Calu3 (cell line): ENCODE measurements at regions of chr3 and their contacts with region 1.

Region 1: DNA sequence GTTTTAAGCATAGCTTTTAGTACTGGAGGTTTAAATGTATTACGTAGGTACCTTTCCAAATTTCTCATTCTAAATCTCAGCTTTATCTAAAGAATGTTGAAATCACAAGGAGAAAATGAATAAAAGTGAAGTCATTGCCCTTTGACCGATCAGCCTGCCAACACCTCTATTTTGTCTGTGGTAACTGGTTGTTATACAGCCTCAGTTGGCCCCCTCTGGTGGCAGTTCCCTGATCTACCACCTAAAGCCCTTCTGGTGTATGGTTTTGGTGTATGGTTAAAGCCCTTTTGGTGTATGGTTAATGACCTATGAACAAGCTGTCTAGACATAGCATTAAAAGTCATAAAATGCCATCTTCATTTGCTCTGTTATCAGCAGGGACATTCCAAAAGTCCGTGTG is 378.2 kb upstream of the AZI2 start:
- DNase-seq: peak; percentile 64
- H3K4me3 Mint-ChIP-seq: no peak overlapping the region
- H3K27ac Mint-ChIP-seq: no peak overlapping the region
- H3K4me1 Mint-ChIP-seq: no peaks in the 10 kb centered on the region
- H3K27me3 Mint-ChIP-seq: no peaks in the 10 kb centered on the region
- CTCF ChIP-seq: peak; percentile 46

Region 2: GRCh38 chr3:28171962-28172361 is 554.9 kb before region 1 on chr3:
- CTCF ChIA-PET with region 1: no interaction called
- intact Hi-C with region 1: no loop called
- DNase-seq: no peak
- H3K4me3 Mint-ChIP-seq: no peak overlapping the region
- H3K27ac Mint-ChIP-seq: no peak overlapping the region
- H3K4me1 Mint-ChIP-seq: no peaks in the 10 kb centered on the region
- H3K27me3 Mint-ChIP-seq: no peaks in the 10 kb centered on the region
- CTCF ChIP-seq: no peak

Region 3: GRCh38 chr3:28476194-28476593 is 250.6 kb before region 1 on chr3:
- CTCF ChIA-PET with region 1: no interaction called
- intact Hi-C with region 1: loop called (anchors 1 kb)
- DNase-seq: no peak
- H3K4me3 Mint-ChIP-seq: no peak overlapping the region
- H3K27ac Mint-ChIP-seq: no peak overlapping the region
- H3K4me1 Mint-ChIP-seq: no peaks in the 10 kb centered on the region
- H3K27me3 Mint-ChIP-seq: no peaks in the 10 kb centered on the region
- CTCF ChIP-seq: peak; percentile 31

Region 4: GRCh38 chr3:28556195-28556594 is 170.6 kb before region 1 on chr3:
- CTCF ChIA-PET with region 1: no interaction called
- intact Hi-C with region 1: loop called (anchors 5 kb)
- DNase-seq: no peak
- H3K4me3 Mint-ChIP-seq: no peak overlapping the region
- H3K27ac Mint-ChIP-seq: no peak overlapping the region
- H3K4me1 Mint-ChIP-seq: no peaks in the 10 kb centered on the region
- H3K27me3 Mint-ChIP-seq: no peaks in the 10 kb centered on the region
- CTCF ChIP-seq: no peak

Region 5: GRCh38 chr3:28667646-28668621 is 58.9 kb before region 1 on chr3:
- CTCF ChIA-PET with region 1: interaction called, 16 read pairs
- intact Hi-C with region 1: loop called (anchors 1 kb)
- DNase-seq: peak; percentile 63
- H3K4me3 Mint-ChIP-seq: no peak overlapping the region
- H3K27ac Mint-ChIP-seq: no peak overlapping the region
- H3K4me1 Mint-ChIP-seq: no peaks in the 10 kb centered on the region
- H3K27me3 Mint-ChIP-seq: no peaks in the 10 kb centered on the region
- CTCF ChIP-seq: peak; percentile 48

Region 6: GRCh38 chr3:28711293-28711692 is 15.5 kb before region 1 on chr3:
- CTCF ChIA-PET with region 1: no interaction called
- intact Hi-C with region 1: no loop called
- DNase-seq: no peak
- H3K4me3 Mint-ChIP-seq: no peak overlapping the region
- H3K27ac Mint-ChIP-seq: no peak overlapping the region
- H3K4me1 Mint-ChIP-seq: no peaks in the 10 kb centered on the region
- H3K27me3 Mint-ChIP-seq: no peaks in the 10 kb centered on the region
- CTCF ChIP-seq: no peak

Region 7: DNA sequence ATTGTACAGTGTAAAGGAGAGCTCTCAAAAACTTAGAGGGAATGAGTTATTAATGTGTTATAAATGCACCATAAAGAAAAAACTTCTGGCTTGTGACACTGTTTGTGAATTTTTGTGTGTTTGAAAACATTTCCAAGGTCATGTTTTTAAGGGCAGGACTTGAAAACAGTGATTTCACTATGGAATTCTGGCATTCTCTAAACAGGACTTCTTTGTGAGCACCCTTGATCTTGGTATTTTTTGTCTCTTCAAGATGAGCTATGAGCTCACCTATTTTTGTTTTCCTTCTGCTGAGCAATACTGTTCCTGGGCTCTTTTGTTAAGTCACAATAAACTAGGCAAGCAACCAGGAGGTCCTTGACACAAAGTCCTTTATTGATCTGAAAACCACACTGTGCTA is 838.4 kb after region 1 on chr3:
- CTCF ChIA-PET with region 1: no interaction called
- intact Hi-C with region 1: loop called (anchors 5 kb)
- DNase-seq: no peak
- H3K4me3 Mint-ChIP-seq: no peak overlapping the region
- H3K27ac Mint-ChIP-seq: no peak overlapping the region
- H3K4me1 Mint-ChIP-seq: no peaks in the 10 kb centered on the region
- H3K27me3 Mint-ChIP-seq: no peaks in the 10 kb centered on the region
- CTCF ChIP-seq: no peak